Naive thymus-derived CD4-positive, alpha-beta T cell (primary cell): ENCODE measurements at regions of chr2 and their contacts with region 1.

Region 1: GRCh38 chr2:108855194-108855593 is 68.6 kb downstream of the CCDC138 start:
- DNase-seq: peak in 6 of 9 donors; percentile 27 to 66 (median 54)
- ATAC-seq: peak; percentile 85
- H3K4me3 ChIP-seq: no peak overlapping the region
- H3K4me3 Mint-ChIP-seq: no peak overlapping the region
- H3K27ac ChIP-seq: no peak overlapping the region
- H3K27ac Mint-ChIP-seq: no peak overlapping the region
- H3K4me1 ChIP-seq: no peaks in the 10 kb centered on the region
- H3K4me1 Mint-ChIP-seq: peaks cover 0 to 8% (median 4%) of the 10 kb centered on the region in 7 donors
- H3K27me3 ChIP-seq: no peaks in the 10 kb centered on the region
- H3K27me3 Mint-ChIP-seq: no peaks in the 10 kb centered on the region

Region 2: GRCh38 chr2:108786354-108787199 is 68.6 kb before region 1 on chr2 and contains the start of gene CCDC138:
- CTCF ChIA-PET with region 1: no interaction called
- POLR2A ChIA-PET with region 1: no interaction called
- intact Hi-C with region 1: no loop called
- DNase-seq: peak; percentile 86 to 93 (median 91)
- ATAC-seq: peak; percentile 98
- H3K4me3 ChIP-seq: peak within 1 kb of the TSS; percentile 88
- H3K4me3 Mint-ChIP-seq: peak within 1 kb of the TSS; percentile 88 to 100 (median 97)
- H3K27ac ChIP-seq: peak within 1 kb of the TSS; percentile 90
- H3K27ac Mint-ChIP-seq: peak within 1 kb of the TSS; percentile 69 to 99 (median 97)
- H3K4me1 ChIP-seq: peaks cover 6 to 13% of the 10 kb centered on the region in 2 donors
- H3K4me1 Mint-ChIP-seq: peaks cover 6 to 21% (median 17%) of the 10 kb centered on the region in 7 donors
- H3K27me3 ChIP-seq: no peaks in the 10 kb centered on the region
- H3K27me3 Mint-ChIP-seq: no peaks in the 10 kb centered on the region
- total RNA-seq, gene CCDC138: 2.7 to 10.5 (median 7.5) TPM

Region 3: GRCh38 chr2:109102588-109103233 is 247.5 kb after region 1 on chr2:
- CTCF ChIA-PET with region 1: no interaction called
- POLR2A ChIA-PET with region 1: no interaction called
- intact Hi-C with region 1: no loop called
- DNase-seq: peak in 7 of 9 donors; percentile 17 to 45 (median 33)
- ATAC-seq: peak; percentile 57
- H3K4me3 ChIP-seq: no peak overlapping the region
- H3K4me3 Mint-ChIP-seq: peak overlapping the region in 8 of 10 donors; percentile 33 to 74 (median 64)
- H3K27ac ChIP-seq: no peak overlapping the region
- H3K27ac Mint-ChIP-seq: peak overlapping the region in 8 of 9 donors; percentile 21 to 87 (median 66)
- H3K4me1 ChIP-seq: peaks cover 0 to 13% of the 10 kb centered on the region in 2 donors
- H3K4me1 Mint-ChIP-seq: peaks cover 4 to 41% (median 36%) of the 10 kb centered on the region in 7 donors
- H3K27me3 ChIP-seq: no peaks in the 10 kb centered on the region
- H3K27me3 Mint-ChIP-seq: peaks cover 0 to 18% (median 0%) of the 10 kb centered on the region in 5 donors

Region 4: DNA sequence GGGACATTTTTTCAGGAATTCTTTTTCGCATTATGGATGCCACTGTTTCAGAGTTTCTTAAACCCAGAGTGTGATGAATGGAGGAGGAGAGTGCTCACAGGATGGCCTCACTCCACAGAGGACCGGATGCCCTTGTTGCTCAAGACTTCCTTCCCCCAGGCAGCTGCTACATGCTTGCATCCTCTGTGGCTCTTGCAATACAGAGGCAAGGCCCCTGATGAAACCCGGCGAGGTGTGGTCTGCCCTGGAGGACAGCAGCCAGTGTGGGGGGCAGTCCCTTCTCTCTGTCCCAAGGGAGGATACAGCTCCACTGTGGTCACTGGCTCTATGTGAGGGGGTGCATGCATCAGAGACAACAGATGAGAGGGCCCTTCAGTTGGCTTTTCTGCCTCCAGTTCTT is 383.4 kb after region 1 on chr2:
- CTCF ChIA-PET with region 1: no interaction called
- POLR2A ChIA-PET with region 1: no interaction called
- intact Hi-C with region 1: loop called in 1 of 2 experiments (anchors 1 kb)
- DNase-seq: peak in 8 of 9 donors; percentile 18 to 64 (median 53)
- ATAC-seq: peak; percentile 94
- H3K4me3 ChIP-seq: no peak overlapping the region
- H3K4me3 Mint-ChIP-seq: peak overlapping the region; percentile 7 to 73 (median 43)
- H3K27ac ChIP-seq: no peak overlapping the region
- H3K27ac Mint-ChIP-seq: peak overlapping the region in 4 of 9 donors; percentile 54 to 87 (median 71)
- H3K4me1 ChIP-seq: peaks cover 6 to 12% of the 10 kb centered on the region in 2 donors
- H3K4me1 Mint-ChIP-seq: peaks cover 25 to 59% (median 44%) of the 10 kb centered on the region in 7 donors
- H3K27me3 ChIP-seq: no peaks in the 10 kb centered on the region
- H3K27me3 Mint-ChIP-seq: peaks cover 0 to 10% (median 0%) of the 10 kb centered on the region in 5 donors

Region 5: GRCh38 chr2:109510136-109511028 is 655.2 kb after region 1 on chr2:
- CTCF ChIA-PET with region 1: interaction called, 15 read pairs
- POLR2A ChIA-PET with region 1: no interaction called
- intact Hi-C with region 1: loop called (anchors 1 kb)
- DNase-seq: peak; percentile 56 to 83 (median 74)
- ATAC-seq: peak; percentile 80
- H3K4me3 ChIP-seq: no peak overlapping the region
- H3K4me3 Mint-ChIP-seq: no peak overlapping the region
- H3K27ac ChIP-seq: no peak overlapping the region
- H3K27ac Mint-ChIP-seq: peak overlapping the region in 4 of 9 donors; percentile 22 to 46 (median 44)
- H3K4me1 ChIP-seq: peaks cover 0 to 2% of the 10 kb centered on the region in 2 donors
- H3K4me1 Mint-ChIP-seq: peaks cover 0 to 7% (median 4%) of the 10 kb centered on the region in 7 donors
- H3K27me3 ChIP-seq: no peaks in the 10 kb centered on the region
- H3K27me3 Mint-ChIP-seq: no peaks in the 10 kb centered on the region